Cardiac septum (tissue), 1 donor: ENCODE measurements at regions of chr3 and their contacts with region 1.

Region 1: GRCh38 chr3:177057768-177058167 is 139.5 kb downstream of the TBL1XR1 start:
- DNase-seq: no peak

Region 2: DNA sequence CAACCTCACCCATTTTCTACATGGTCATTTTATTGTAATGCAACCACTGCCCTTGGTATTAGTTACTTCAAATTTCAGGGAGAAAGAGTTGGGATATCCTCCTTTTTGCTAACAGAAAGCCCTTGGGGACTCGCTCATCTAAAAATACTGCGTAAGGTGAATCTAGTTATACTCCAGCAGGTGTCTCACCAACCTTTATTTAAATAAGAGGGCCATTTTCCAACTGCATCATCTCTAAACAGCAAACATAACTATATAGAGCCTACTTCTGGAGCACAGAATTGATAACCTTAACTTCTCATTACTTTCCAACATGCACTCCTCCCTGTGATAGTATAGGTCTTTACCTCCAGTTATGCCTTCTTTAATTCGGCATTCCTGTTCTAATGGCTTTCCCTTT is 62.1 kb after region 1 on chr3:
- intact Hi-C with region 1: loop called (anchors 5 kb)
- DNase-seq: no peak